Activated CD4-positive, alpha-beta memory T cell treated with anti-CD3 and anti-CD28 coated beads, Interleukin-2, amount 10 ng/mL, durations not matched to agents 7 days and 5 days (primary cell): ENCODE measurements at regions of chr5 and their contacts with region 1.

Region 1: DNA sequence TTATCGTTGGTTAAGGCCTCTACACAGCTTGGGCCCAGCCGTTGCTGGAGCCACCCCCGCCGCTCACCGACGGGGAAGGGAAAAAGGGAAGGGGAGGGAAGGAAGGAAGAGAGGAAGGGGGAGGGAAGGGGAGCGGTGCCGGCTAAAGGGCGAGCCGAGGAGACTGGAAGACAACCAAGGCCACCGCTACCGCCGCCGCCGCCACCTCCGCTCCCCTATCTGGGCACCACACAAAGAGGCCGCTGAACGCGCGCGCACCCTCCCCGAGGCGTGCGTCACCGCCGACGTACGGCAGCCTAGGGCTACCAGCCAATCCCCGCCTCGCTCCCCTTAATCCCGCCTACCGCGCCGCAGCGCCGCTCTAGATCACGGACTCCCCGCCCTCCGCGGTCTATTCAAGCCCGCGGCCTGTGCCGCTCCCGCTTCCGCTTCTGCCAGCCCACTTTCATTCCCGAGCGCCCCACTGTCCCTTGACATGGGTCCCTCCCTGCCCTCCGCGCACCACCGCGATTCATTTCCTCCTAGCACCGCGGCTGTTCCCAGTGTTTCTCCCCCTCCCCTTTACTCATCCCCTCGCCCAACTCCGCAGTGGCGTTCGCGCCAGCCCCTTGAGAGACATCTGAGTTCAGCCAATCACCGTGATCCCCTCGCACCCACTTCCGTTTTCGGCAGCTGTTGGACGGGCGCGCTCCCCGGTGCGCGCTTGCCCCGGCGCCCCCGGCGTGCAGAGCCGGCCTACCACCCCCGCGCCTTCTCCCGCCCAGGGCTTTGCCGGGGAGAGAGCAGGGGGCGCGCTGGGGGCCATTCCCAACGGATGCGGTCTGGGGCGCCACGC is at the start of gene HNRNPA0:
- DNase-seq: peak; percentile 96
- H3K4me3 Mint-ChIP-seq: peak within 1 kb of the TSS; percentile 86
- H3K27ac Mint-ChIP-seq: peak within 1 kb of the TSS; percentile 97
- H3K4me1 Mint-ChIP-seq: peaks cover 37% of the 10 kb centered on the region
- H3K27me3 Mint-ChIP-seq: peaks cover 3% of the 10 kb centered on the region
- total RNA-seq, gene HNRNPA0: 24.0 to 24.6 TPM

Region 2: GRCh38 chr5:137665678-137666460 is 88.5 kb before region 1 on chr5:
- CTCF ChIA-PET with region 1: interaction called, 9 read pairs
- POLR2A ChIA-PET with region 1: interaction called, 14 read pairs
- DNase-seq: peak; percentile 63
- H3K4me3 Mint-ChIP-seq: no peak overlapping the region
- H3K27ac Mint-ChIP-seq: peak overlapping the region; percentile 17
- H3K4me1 Mint-ChIP-seq: peaks cover 22% of the 10 kb centered on the region
- H3K27me3 Mint-ChIP-seq: no peaks in the 10 kb centered on the region

Region 3: GRCh38 chr5:137735555-137736284 is 18.6 kb before region 1 on chr5 and contains the start of gene KLHL3:
- CTCF ChIA-PET with region 1: interaction called, 30 read pairs
- POLR2A ChIA-PET with region 1: interaction called, 56 read pairs
- DNase-seq: peak; percentile 31
- H3K4me3 Mint-ChIP-seq: no peak within 1 kb of the TSS
- H3K27ac Mint-ChIP-seq: no peak within 1 kb of the TSS
- H3K4me1 Mint-ChIP-seq: peaks cover 8% of the 10 kb centered on the region
- H3K27me3 Mint-ChIP-seq: peaks cover 6% of the 10 kb centered on the region
- total RNA-seq, gene KLHL3: 2.8 to 3.6 TPM

Region 4: GRCh38 chr5:137778772-137779564 is 24.6 kb after region 1 on chr5:
- CTCF ChIA-PET with region 1: interaction called, 11 read pairs
- POLR2A ChIA-PET with region 1: interaction called, 7 read pairs
- DNase-seq: no peak
- H3K4me3 Mint-ChIP-seq: no peak overlapping the region
- H3K27ac Mint-ChIP-seq: no peak overlapping the region
- H3K4me1 Mint-ChIP-seq: no peaks in the 10 kb centered on the region
- H3K27me3 Mint-ChIP-seq: peaks cover 13% of the 10 kb centered on the region

Region 5: GRCh38 chr5:137800700-137801411 is 46.5 kb after region 1 on chr5:
- CTCF ChIA-PET with region 1: no interaction called
- POLR2A ChIA-PET with region 1: no interaction called
- DNase-seq: no peak
- H3K4me3 Mint-ChIP-seq: no peak overlapping the region
- H3K27ac Mint-ChIP-seq: no peak overlapping the region
- H3K4me1 Mint-ChIP-seq: no peaks in the 10 kb centered on the region
- H3K27me3 Mint-ChIP-seq: peaks cover 4% of the 10 kb centered on the region